ENCODE measurements at regions of chr18 and their contacts with region 1.

Region 1: GRCh38 chr18:49813319-49814146 is at the start of gene ACAA2:
- DNase-seq: peak; percentile 85 to 92
- H3K4me3 ChIP-seq: peak within 1 kb of the TSS; percentile 68 to 76
- H3K27ac ChIP-seq: peak within 1 kb of the TSS; percentile 83 to 95
- H3K4me1 ChIP-seq: no peaks in the 10 kb centered on the region
- H3K27me3 ChIP-seq: no peaks in the 10 kb centered on the region
- CTCF ChIP-seq: peak in 1 of 4 experiments; percentile 3
- POLR2A ChIP-seq: peak; percentile 74 to 82
- total RNA-seq, gene ACAA2: 21.8 to 50.5 (median 41.7) TPM

Region 2: GRCh38 chr18:49486953-49487710 is 326.4 kb before region 1 on chr18 and contains the start of gene C18orf32:
- intact Hi-C with region 1: loop called (anchors 10 kb)
- DNase-seq: peak; percentile 93
- H3K4me3 ChIP-seq: peak within 1 kb of the TSS; percentile 66 to 81
- H3K27ac ChIP-seq: peak within 1 kb of the TSS; percentile 89 to 96
- H3K4me1 ChIP-seq: no peaks in the 10 kb centered on the region
- H3K27me3 ChIP-seq: no peaks in the 10 kb centered on the region
- CTCF ChIP-seq: no peak
- POLR2A ChIP-seq: peak; percentile 91 to 97
- total RNA-seq, gene C18orf32: 20.7 to 42.6 (median 31.9) TPM

Region 3: DNA sequence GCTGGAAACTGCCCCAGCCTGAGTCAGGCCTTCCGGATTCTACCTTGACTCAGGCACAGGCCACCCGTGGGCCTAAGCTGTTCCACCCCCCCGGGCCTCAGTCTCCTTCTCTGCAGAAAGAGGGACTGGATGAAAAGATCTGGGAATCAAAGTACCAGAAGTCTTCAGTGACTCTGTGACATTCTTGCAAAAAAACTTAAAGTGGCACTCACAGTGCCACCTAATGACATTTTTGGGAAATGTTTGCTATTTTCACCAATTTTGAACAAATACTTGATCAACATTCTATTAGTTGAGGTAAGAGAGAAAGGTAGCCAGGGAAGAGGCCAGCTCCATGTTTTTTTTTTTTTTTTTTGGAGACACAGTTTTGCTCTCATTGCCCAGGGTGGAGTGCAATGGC is 48.1 kb after region 1 on chr18:
- intact Hi-C with region 1: no loop called
- DNase-seq: no peak
- H3K4me3 ChIP-seq: no peak overlapping the region
- H3K27ac ChIP-seq: no peak overlapping the region
- H3K4me1 ChIP-seq: no peaks in the 10 kb centered on the region
- H3K27me3 ChIP-seq: no peaks in the 10 kb centered on the region
- CTCF ChIP-seq: peak in 1 of 4 experiments; percentile 9
- POLR2A ChIP-seq: no peak

Measured in uterus (tissue), 4 donors.